Esophagus muscularis mucosa (tissue), 4 donors: ENCODE measurements at regions of chr6 and their contacts with region 1.

Region 1: DNA sequence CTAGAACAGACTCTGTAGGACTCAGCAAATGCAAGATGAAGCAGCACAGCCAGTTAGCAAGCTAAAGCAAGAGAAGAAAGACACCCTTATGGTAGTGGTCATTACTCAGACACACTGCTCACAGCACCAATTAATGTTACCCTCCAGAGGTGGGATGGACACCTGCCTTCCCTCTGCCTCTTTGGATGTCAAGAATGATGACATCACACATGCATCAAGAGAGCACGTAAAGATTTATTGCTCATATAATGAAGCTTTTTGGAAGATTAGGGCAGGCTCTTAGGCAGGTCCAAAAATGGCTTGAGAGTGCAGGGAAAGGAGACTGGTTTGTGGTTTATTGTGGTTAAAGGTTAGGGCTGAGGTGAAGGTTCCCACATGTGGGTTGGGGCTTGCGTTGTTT is 137.0 kb downstream of the PRDM13 start:
- DNase-seq: no peak
- H3K4me3 ChIP-seq: no peak overlapping the region
- H3K27ac ChIP-seq: no peak overlapping the region
- H3K4me1 ChIP-seq: peaks cover 0 to 4% (median 2%) of the 10 kb centered on the region in 4 donors
- H3K27me3 ChIP-seq: peaks cover 0 to 35% (median 0%) of the 10 kb centered on the region in 4 donors
- CTCF ChIP-seq: no peak
- EP300 ChIP-seq: no peak
- POLR2A ChIP-seq: no peak

Region 2: DNA sequence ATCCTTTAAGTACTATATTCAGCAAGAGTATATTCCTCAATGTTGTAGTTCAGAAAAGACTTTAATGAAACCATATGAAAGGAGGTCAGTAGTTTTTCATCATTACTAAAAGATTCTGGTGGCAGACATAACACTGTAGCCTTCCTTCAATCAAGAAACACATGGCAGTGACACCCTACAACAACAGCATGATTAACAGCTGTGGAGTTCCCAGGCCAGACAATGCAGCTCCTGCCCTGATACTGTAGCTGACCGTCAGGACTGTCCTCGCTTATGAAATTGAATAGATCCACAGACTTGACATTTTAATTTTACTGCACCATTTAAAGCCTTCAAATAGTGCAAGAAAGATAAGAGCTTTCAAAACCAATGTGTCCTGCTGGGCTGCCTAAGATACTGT is 272.0 kb before region 1 on chr6:
- intact Hi-C with region 1: loop called (anchors 5 kb)
- DNase-seq: no peak
- H3K4me3 ChIP-seq: no peak overlapping the region
- H3K27ac ChIP-seq: no peak overlapping the region
- H3K4me1 ChIP-seq: no peaks in the 10 kb centered on the region
- H3K27me3 ChIP-seq: no peaks in the 10 kb centered on the region
- CTCF ChIP-seq: no peak
- EP300 ChIP-seq: no peak
- POLR2A ChIP-seq: no peak

Region 3: GRCh38 chr6:99588618-99589289 is 154.9 kb before region 1 on chr6:
- intact Hi-C with region 1: loop called (anchors 5 kb)
- DNase-seq: peak; percentile 92
- H3K4me3 ChIP-seq: peak overlapping the region; percentile 55 to 65 (median 57)
- H3K27ac ChIP-seq: no peak overlapping the region
- H3K4me1 ChIP-seq: peaks cover 22 to 30% (median 28%) of the 10 kb centered on the region in 4 donors
- H3K27me3 ChIP-seq: peaks cover 0 to 72% (median 46%) of the 10 kb centered on the region in 4 donors
- CTCF ChIP-seq: peak; percentile 47 to 51 (median 48)
- EP300 ChIP-seq: no peak
- POLR2A ChIP-seq: no peak

Region 4: DNA sequence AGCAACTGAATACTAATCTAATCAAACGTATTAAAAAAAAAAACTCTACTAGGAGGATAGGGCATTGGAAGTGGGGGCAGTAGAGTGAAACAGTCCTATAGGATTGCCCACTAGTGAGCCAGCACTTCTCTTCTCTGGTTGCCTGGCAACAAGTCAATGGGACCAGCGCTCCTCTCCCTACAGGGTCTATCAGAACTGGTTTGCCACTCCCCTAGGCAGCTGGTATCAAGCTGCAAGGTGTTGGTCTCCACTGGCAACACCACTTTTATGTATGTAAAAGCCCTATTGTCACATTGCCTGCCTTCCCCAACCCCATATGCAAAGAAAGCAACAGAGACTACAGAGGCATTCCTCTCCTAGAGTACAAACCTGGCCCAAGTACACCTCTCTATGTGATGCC is 417.3 kb after region 1 on chr6:
- intact Hi-C with region 1: no loop called
- DNase-seq: no peak
- H3K4me3 ChIP-seq: no peak overlapping the region
- H3K27ac ChIP-seq: no peak overlapping the region
- H3K4me1 ChIP-seq: no peaks in the 10 kb centered on the region
- H3K27me3 ChIP-seq: peaks cover 0 to 14% (median 0%) of the 10 kb centered on the region in 4 donors
- CTCF ChIP-seq: no peak
- EP300 ChIP-seq: no peak
- POLR2A ChIP-seq: no peak